ENCODE measurements at regions of chr10 and their contacts with region 1.

Region 1: GRCh38 chr10:104580774-104581675 is 60.1 kb upstream of the SORCS3 start:
- DNase-seq: peak in 1 of 2 donors; percentile 78
- H3K4me3 ChIP-seq: no peak overlapping the region
- H3K27ac ChIP-seq: no peak overlapping the region
- H3K4me1 ChIP-seq: no peaks in the 10 kb centered on the region
- H3K27me3 ChIP-seq: no peaks in the 10 kb centered on the region
- CTCF ChIP-seq: peak; percentile 51 to 84 (median 79)

Region 2: DNA sequence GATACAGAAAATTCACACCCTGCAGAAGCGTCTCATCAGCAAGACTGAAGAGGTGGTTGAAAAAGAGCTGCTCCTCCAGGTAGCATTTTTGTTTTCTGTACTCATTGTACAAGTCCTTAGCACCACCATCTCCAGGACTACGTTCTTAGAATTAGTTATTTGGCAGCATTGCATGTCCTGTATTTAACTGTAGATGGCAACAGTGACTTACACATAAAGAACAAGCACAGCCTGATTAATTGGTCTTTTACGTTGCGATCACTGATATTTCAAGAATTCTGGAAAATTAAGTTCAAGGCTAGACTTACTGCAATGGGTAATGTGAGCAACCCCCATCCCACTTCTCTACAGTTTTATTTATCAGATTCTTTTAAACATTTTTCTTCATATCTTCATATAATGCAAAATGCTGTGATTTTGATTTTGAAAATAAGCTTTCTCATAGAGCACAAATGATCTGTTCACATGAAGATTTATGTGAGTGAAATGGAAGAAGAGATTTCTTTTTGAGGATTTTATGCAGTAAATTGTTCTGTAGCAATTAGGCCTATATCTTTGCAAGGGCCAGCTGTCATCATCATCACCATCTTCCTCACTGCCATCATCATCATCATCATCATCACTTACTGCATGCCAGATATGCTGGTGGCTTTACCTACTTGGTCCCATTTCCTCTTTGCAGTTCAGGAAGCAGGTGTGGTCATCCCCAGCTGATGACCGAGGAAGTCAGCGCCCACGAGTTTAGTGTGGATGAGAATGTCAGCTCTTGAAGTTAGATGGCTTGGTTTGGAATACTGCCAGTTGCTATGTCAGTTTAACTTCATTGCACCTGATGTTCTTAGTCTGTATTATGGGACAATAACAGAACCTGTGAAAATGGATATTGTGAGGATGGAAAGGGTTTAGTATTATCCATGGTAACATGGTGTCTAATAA is 174.0 kb before region 1 on chr10:
- intact Hi-C with region 1: loop called (anchors 1 kb)
- DNase-seq: no peak
- H3K4me3 ChIP-seq: no peak overlapping the region
- H3K27ac ChIP-seq: no peak overlapping the region
- H3K4me1 ChIP-seq: no peaks in the 10 kb centered on the region
- H3K27me3 ChIP-seq: no peaks in the 10 kb centered on the region
- CTCF ChIP-seq: peak; percentile 57 to 81 (median 67)

Region 3: GRCh38 chr10:104548090-104548489 is 32.9 kb before region 1 on chr10:
- intact Hi-C with region 1: loop called (anchors 1 kb)
- DNase-seq: no peak
- H3K4me3 ChIP-seq: no peak overlapping the region
- H3K27ac ChIP-seq: no peak overlapping the region
- H3K4me1 ChIP-seq: no peaks in the 10 kb centered on the region
- H3K27me3 ChIP-seq: no peaks in the 10 kb centered on the region
- CTCF ChIP-seq: no peak

Region 4: GRCh38 chr10:105406486-105406885 is 825.5 kb after region 1 on chr10:
- intact Hi-C with region 1: no loop called
- DNase-seq: no peak
- H3K4me3 ChIP-seq: no peak overlapping the region
- H3K27ac ChIP-seq: no peak overlapping the region
- H3K4me1 ChIP-seq: no peaks in the 10 kb centered on the region
- H3K27me3 ChIP-seq: no peaks in the 10 kb centered on the region
- CTCF ChIP-seq: no peak

Measured in ascending aorta (tissue), 2 donors.